K562 (cell line): ENCODE measurements at regions of chr13 and their contacts with region 1.

Region 1: DNA sequence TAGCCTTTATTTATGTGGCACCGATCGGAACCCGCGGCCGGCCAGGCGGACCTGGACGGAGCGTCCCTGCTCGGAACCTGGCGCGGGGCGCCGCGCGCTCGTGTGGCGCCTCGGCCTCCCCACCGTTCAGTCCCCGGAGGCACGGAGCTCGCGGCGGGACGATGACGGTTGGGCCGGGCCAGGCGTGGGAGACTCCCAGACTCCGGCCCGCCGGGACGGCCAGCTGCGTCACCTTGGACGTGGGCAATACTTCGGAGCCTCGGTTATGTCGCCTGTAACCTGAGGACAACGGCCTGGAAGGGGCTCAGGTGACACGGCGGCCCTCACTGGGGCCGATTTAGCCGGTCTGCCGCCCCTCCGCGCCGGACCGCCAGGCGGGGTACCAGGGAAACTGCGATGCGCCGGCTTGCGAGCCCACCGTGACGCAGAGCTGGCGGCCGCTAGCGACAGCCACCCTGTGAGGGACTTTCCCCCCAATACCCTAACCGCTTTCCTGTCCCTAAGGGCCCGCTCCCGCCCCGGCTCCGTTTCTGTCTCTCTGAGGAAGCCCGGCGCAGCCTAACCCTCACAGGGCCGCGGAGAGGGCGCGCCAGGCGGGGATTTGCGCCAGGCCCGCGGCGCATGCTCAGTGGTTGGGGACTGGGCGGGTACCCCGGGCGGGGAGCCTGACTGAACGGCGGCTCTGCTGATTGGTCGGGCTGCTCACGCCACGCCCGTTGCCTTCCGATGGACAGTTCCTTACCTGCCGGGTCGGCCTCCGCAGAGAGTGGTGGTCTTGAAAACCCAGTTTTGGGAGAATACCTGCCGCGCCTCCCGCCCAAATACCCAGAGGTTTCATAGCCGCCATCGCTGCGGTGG is 109.5 kb upstream of the DOCK9 start:
- DNase-seq: peak; percentile 90 to 96 (median 91)
- ATAC-seq: peak; percentile 95
- H3K4me3 ChIP-seq: peak overlapping the region; percentile 80
- H3K27ac ChIP-seq: peak overlapping the region; percentile 72
- H3K4me1 ChIP-seq: peaks cover 20 to 25% of the 10 kb centered on the region in 2 experiments; a peak in 4 of 5 replicates
- H3K27me3 ChIP-seq: no peaks in the 10 kb centered on the region
- CTCF ChIP-seq: 0 out of 6 replicates have a peak, but pooled peaks of 1 of the 3 experiments have one; percentile 2
- EP300 ChIP-seq: no peak
- POLR2A ChIP-seq: peak; percentile 74
- RAD21 ChIP-seq: no peak

Region 2: DNA sequence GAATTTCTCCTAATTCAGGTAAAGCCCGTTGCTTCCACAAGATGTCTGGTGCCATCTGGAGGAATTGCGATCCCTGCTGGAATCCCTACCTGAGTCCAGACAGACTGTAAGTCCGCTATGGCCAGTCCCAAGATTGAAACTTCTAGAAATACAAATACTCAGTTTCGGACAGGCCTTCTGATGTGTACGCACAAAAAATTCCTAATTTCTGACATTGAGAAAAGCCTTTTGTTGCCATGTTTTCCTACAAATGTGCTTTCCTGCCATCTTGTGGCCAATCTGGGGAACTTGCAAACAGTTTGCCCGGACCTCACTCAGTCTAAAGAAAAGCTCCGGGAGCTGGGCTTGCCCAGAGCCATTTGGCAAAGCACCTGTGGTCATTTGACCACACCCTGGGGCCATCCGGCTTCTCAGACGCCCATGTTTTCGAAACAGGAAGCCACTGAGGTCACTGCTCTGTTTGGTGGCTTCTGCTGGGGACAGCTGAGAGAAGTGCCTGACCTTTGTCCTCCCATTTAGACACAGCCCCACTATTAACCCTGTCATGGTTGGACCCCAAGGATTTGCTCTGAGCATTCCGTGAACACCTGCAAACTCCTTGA is 414.3 kb before region 1 on chr13:
- CTCF ChIA-PET with region 1: no interaction called
- POLR2A ChIA-PET with region 1: no interaction called
- in situ Hi-C with region 1: no loop called
- intact Hi-C with region 1: no loop called
- DNase-seq: peak; percentile 53 to 55 (median 54)
- ATAC-seq: peak; percentile 91
- H3K4me3 ChIP-seq: no peak overlapping the region
- H3K27ac ChIP-seq: no peak overlapping the region
- H3K4me1 ChIP-seq: no peaks in the 10 kb centered on the region
- H3K27me3 ChIP-seq: peaks cover 2 to 29% of the 10 kb centered on the region in 2 experiments; a peak in 4 of 5 replicates
- CTCF ChIP-seq: peak; percentile 58 to 80 (median 73)
- EP300 ChIP-seq: no peak
- POLR2A ChIP-seq: no peak
- RAD21 ChIP-seq: peak; percentile 63 to 78

Region 3: GRCh38 chr13:98997738-98998641 is 89.3 kb before region 1 on chr13:
- CTCF ChIA-PET with region 1: no interaction called
- POLR2A ChIA-PET with region 1: no interaction called
- in situ Hi-C with region 1: no loop called
- intact Hi-C with region 1: loop called (anchors 10 kb)
- DNase-seq: no peak
- ATAC-seq: no peak
- H3K4me3 ChIP-seq: no peak overlapping the region
- H3K27ac ChIP-seq: no peak overlapping the region
- H3K4me1 ChIP-seq: peaks cover 0 to 20% of the 10 kb centered on the region in 2 experiments; a peak in 3 of 5 replicates
- H3K27me3 ChIP-seq: no peaks in the 10 kb centered on the region
- CTCF ChIP-seq: no peak
- EP300 ChIP-seq: no peak
- POLR2A ChIP-seq: no peak
- RAD21 ChIP-seq: no peak

Region 4: DNA sequence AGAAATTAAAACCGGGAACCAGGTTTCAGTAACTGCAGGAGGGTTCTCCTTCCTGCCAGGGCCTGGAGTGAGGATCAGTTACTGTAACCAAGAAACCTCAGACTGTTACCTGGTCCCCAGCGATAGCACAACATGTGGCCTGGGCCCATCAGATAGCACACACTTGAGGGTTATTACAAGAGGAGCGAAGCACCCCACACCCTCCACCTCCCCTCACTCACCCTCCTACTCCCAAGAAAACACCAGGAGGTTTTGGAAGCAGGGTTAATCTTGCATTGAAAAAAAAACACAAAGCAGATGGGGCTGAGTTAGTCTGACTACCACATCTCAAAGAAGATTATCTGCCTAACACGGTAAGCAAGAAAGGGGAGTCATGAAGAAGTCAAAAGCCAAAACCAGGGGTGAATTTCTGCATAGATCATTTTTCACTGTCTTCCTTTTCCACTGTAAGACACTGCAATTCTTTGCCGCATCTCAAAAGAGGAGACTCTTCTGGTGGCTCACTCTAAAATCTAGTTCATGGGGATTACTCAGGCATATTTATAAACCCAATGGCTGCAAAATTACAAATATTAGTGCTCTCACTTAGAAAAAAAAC is 33.6 kb before region 1 on chr13:
- CTCF ChIA-PET with region 1: no interaction called
- POLR2A ChIA-PET with region 1: interaction called, 3 read pairs
- in situ Hi-C with region 1: no loop called
- intact Hi-C with region 1: loop called (anchors 5 kb)
- DNase-seq: peak; percentile 86 to 95 (median 88)
- ATAC-seq: peak; percentile 89
- H3K4me3 ChIP-seq: no peak overlapping the region
- H3K27ac ChIP-seq: peak overlapping the region; percentile 82
- H3K4me1 ChIP-seq: peaks cover 47 to 72% of the 10 kb centered on the region in 2 experiments
- H3K27me3 ChIP-seq: no peaks in the 10 kb centered on the region
- CTCF ChIP-seq: no peak
- EP300 ChIP-seq: peak; percentile 98
- POLR2A ChIP-seq: no peak
- RAD21 ChIP-seq: 0 out of 4 replicates have a peak, but pooled peaks of 1 of the 2 experiments have one; percentile 8

Region 5: DNA sequence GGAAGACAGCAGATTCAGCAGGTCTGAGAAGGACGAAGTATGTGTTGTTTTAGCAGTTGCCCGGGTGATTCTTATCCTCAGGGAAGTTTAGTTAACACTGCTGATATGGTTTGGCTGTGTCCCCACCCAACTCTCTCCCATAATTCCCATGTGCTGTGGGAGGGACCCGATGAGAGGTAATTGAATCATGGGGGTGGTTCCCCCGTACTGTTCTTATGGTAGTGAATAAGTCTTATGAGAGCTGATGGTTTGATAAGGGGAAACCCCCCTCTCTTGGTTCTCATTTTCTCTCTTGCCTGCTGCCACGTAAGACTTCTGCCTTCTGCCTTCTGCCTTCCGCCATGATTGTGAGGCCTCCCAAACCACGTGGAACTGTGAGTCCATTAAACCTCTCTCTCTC is 32.4 kb after region 1 on chr13:
- CTCF ChIA-PET with region 1: no interaction called
- POLR2A ChIA-PET with region 1: no interaction called
- in situ Hi-C with region 1: no loop called
- intact Hi-C with region 1: no loop called
- DNase-seq: no peak
- ATAC-seq: no peak
- H3K4me3 ChIP-seq: no peak overlapping the region
- H3K27ac ChIP-seq: no peak overlapping the region
- H3K4me1 ChIP-seq: no peaks in the 10 kb centered on the region; a peak in 2 of 5 replicates
- H3K27me3 ChIP-seq: no peaks in the 10 kb centered on the region
- CTCF ChIP-seq: no peak
- EP300 ChIP-seq: no peak
- POLR2A ChIP-seq: no peak
- RAD21 ChIP-seq: no peak